GM12878 (cell line): ENCODE measurements at regions of chr12 and their contacts with region 1.

Region 1: GRCh38 chr12:27332407-27333301 is at the start of gene BMAL2:
- DNase-seq: no peak
- ATAC-seq: peak; percentile 49
- H3K4me3 ChIP-seq: peak within 1 kb of the TSS; percentile 85
- H3K27ac ChIP-seq: peak within 1 kb of the TSS; percentile 89
- H3K4me1 ChIP-seq: peaks cover 42% of the 10 kb centered on the region
- H3K27me3 ChIP-seq: no peaks in the 10 kb centered on the region
- CTCF ChIP-seq: no peak
- EP300 ChIP-seq: no peak
- POLR2A ChIP-seq: peak; percentile 87
- RAD21 ChIP-seq: no peak
- polyA plus RNA-seq, gene BMAL2: 7.9 to 13.1 TPM

Region 2: GRCh38 chr12:27319409-27319808 is 13.2 kb before region 1 on chr12:
- CTCF ChIA-PET with region 1: interaction called, 4 read pairs
- POLR2A ChIA-PET with region 1: interaction called, 8 read pairs
- RAD21 ChIA-PET with region 1: interaction called, 10 read pairs
- SMC1A ChIA-PET with region 1: interaction called, 31 read pairs
- in situ Hi-C with region 1: no loop called
- intact Hi-C with region 1: no loop called
- DNase-seq: no peak
- ATAC-seq: no peak
- H3K4me3 ChIP-seq: no peak overlapping the region
- H3K27ac ChIP-seq: no peak overlapping the region
- H3K4me1 ChIP-seq: no peaks in the 10 kb centered on the region
- H3K27me3 ChIP-seq: no peaks in the 10 kb centered on the region
- CTCF ChIP-seq: no peak
- EP300 ChIP-seq: no peak
- POLR2A ChIP-seq: no peak
- RAD21 ChIP-seq: no peak

Region 3: GRCh38 chr12:27343255-27344000 is 10.8 kb after region 1 on chr12:
- CTCF ChIA-PET with region 1: interaction called, 4 read pairs
- POLR2A ChIA-PET with region 1: interaction called, 12 read pairs
- RAD21 ChIA-PET with region 1: interaction called, 5 read pairs
- SMC1A ChIA-PET with region 1: interaction called, 10 read pairs
- in situ Hi-C with region 1: no loop called
- intact Hi-C with region 1: no loop called
- DNase-seq: no peak
- ATAC-seq: peak; percentile 29
- H3K4me3 ChIP-seq: no peak overlapping the region
- H3K27ac ChIP-seq: no peak overlapping the region
- H3K4me1 ChIP-seq: peaks cover 10% of the 10 kb centered on the region
- H3K27me3 ChIP-seq: no peaks in the 10 kb centered on the region
- CTCF ChIP-seq: no peak
- EP300 ChIP-seq: no peak
- POLR2A ChIP-seq: no peak
- RAD21 ChIP-seq: no peak

Region 4: GRCh38 chr12:27412047-27412446 is 79.4 kb after region 1 on chr12:
- CTCF ChIA-PET with region 1: no interaction called
- POLR2A ChIA-PET with region 1: no interaction called
- RAD21 ChIA-PET with region 1: no interaction called
- SMC1A ChIA-PET with region 1: no interaction called
- in situ Hi-C with region 1: no loop called
- intact Hi-C with region 1: no loop called
- DNase-seq: no peak
- ATAC-seq: no peak
- H3K4me3 ChIP-seq: no peak overlapping the region
- H3K27ac ChIP-seq: no peak overlapping the region
- H3K4me1 ChIP-seq: no peaks in the 10 kb centered on the region
- H3K27me3 ChIP-seq: no peaks in the 10 kb centered on the region
- CTCF ChIP-seq: no peak
- EP300 ChIP-seq: no peak
- POLR2A ChIP-seq: no peak
- RAD21 ChIP-seq: no peak

Region 5: GRCh38 chr12:27703710-27704452 is 371.2 kb after region 1 on chr12:
- CTCF ChIA-PET with region 1: interaction called, 4 read pairs
- POLR2A ChIA-PET with region 1: no interaction called
- RAD21 ChIA-PET with region 1: no interaction called
- SMC1A ChIA-PET with region 1: no interaction called
- in situ Hi-C with region 1: no loop called
- intact Hi-C with region 1: loop called (anchors 5 kb)
- DNase-seq: peak; percentile 43
- ATAC-seq: peak; percentile 99
- H3K4me3 ChIP-seq: no peak overlapping the region
- H3K27ac ChIP-seq: no peak overlapping the region
- H3K4me1 ChIP-seq: no peaks in the 10 kb centered on the region
- H3K27me3 ChIP-seq: no peaks in the 10 kb centered on the region
- CTCF ChIP-seq: peak; percentile 83 to 88 (median 88)
- EP300 ChIP-seq: no peak
- POLR2A ChIP-seq: no peak
- RAD21 ChIP-seq: peak; percentile 88